T-cell (primary cell): ENCODE measurements at regions of chr19 and their contacts with region 1.

Region 1: DNA sequence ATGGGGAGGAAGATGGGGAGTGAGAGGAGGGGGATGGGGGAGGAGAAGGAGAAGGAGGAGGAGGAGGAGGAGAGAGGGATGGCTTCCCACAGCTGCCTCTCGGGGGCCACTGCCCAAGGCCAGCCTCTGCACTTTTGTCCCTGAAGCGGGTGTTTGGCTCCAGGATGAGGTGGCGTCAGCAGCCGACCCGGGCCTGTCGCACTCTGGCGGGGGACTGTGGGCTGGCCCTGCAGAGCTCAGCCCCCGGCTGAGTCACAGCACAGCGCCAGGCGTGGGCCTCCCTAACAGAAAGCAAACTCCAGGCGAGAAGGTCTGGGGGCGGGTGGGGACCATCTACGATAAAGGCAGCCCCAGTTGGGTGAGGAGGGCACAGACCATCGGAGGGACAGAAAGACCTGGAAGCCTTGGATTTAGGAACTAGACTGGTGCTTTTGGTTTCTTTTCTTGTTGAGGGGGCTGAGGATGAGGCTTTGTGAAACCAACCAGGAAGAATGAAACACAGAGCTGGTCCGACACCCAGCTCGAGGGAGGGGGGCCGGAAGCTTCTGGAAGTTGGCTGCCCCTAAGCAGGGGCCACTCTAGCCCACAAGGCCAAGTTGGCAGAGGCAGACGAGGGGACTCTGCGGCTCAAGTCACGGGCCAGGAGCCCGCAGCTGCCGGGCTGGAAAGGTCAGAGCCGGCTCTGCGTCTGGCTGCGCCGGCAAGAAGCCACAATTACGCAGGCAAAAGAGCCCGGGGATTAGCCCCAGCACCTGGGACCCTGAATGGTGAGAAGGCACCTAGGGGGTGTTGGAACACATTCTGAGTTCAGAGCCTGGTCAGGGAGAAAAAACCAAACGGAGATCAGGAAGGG is 18.2 kb downstream of the LSM4 start:
- DNase-seq: peak in 34 of 35 experiments; percentile 55 to 87 (median 71)
- ATAC-seq: peak; percentile 73 to 85 (median 81)
- H3K4me3 ChIP-seq: peak overlapping the region; percentile 66 to 92
- H3K4me3 Mint-ChIP-seq: peak overlapping the region; percentile 88 to 90 (median 89)
- H3K27ac ChIP-seq: peak overlapping the region; percentile 96
- H3K27ac Mint-ChIP-seq: peak overlapping the region; percentile 99 to 100
- H3K4me1 ChIP-seq: peaks cover 22 to 75% of the 10 kb centered on the region in 2 experiments
- H3K4me1 Mint-ChIP-seq: peaks cover 43 to 53% (median 49%) of the 10 kb centered on the region in 3 donors
- H3K27me3 ChIP-seq: no peaks in the 10 kb centered on the region
- H3K27me3 Mint-ChIP-seq: no peaks in the 10 kb centered on the region

Region 2: DNA sequence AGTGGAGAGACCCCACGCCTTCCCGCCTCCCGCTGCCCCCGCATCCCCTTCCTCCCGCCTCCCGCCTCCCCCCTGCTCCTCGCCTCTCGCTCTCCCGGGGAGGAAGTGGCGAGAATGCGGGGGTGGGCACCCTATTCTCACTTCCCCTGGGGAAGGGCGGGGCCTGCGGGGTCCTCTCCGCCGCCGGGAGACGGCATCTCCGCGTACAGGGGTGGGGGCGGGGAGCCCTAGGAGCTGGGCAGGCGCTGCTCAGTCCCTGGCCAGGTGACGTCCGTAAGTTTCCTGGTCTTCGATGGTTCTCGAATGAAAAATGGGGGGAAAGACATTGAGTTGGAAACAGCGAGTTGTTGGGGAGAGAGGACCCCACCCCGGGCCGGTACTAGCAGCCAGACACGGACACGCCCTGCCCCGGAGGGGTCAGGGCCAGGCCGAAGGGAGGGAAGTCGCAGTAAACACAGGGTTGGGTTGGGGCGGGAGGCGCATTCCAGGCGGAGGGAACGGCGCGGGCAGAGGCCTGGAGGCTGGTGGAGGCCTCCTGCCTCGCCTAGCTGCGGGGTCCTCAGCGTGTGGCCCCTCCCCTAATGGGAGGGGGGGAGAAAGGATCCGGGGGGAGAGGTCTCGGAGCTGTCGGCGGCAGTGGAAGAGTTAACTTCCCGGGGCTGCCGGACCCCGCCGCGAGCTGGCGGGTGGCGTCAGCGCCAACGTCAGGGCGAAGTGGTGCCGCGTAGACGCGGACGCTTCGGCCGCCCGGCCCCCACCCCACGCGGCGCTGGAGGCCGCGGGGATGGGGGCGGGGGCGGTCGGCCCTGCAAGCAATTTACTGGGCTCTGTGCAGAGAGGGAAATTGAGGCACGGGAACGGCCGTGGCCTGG is 12.9 kb before region 1 on chr19:
- CTCF ChIA-PET with region 1: interaction called in 1 of 2 experiments, 6 read pairs
- POLR2A ChIA-PET with region 1: interaction called in 1 of 2 experiments, 13 read pairs
- DNase-seq: peak in 34 of 35 experiments; percentile 56 to 86 (median 72)
- ATAC-seq: peak; percentile 42 to 56 (median 52)
- H3K4me3 ChIP-seq: peak overlapping the region; percentile 79 to 94
- H3K4me3 Mint-ChIP-seq: peak overlapping the region; percentile 86 to 89 (median 89)
- H3K27ac ChIP-seq: peak overlapping the region; percentile 100
- H3K27ac Mint-ChIP-seq: peak overlapping the region; percentile 93 to 96
- H3K4me1 ChIP-seq: peaks cover 14 to 79% of the 10 kb centered on the region in 2 experiments
- H3K4me1 Mint-ChIP-seq: peaks cover 46 to 69% (median 58%) of the 10 kb centered on the region in 3 donors
- H3K27me3 ChIP-seq: no peaks in the 10 kb centered on the region
- H3K27me3 Mint-ChIP-seq: no peaks in the 10 kb centered on the region

Region 3: GRCh38 chr19:18322759-18323460 is 18.2 kb after region 1 on chr19 and contains the start of gene LSM4:
- CTCF ChIA-PET with region 1: interaction called, 6 to 11 read pairs
- POLR2A ChIA-PET with region 1: interaction called, 3 read pairs
- DNase-seq: peak; percentile 99 to 100 (median 99)
- ATAC-seq: peak; percentile 92 to 95 (median 94)
- H3K4me3 ChIP-seq: peak within 1 kb of the TSS; percentile 84 to 93
- H3K4me3 Mint-ChIP-seq: peak within 1 kb of the TSS; percentile 80 to 86 (median 82)
- H3K27ac ChIP-seq: peak within 1 kb of the TSS; percentile 94
- H3K27ac Mint-ChIP-seq: peak within 1 kb of the TSS; percentile 96 to 98
- H3K4me1 ChIP-seq: peaks cover 36 to 62% of the 10 kb centered on the region in 2 experiments
- H3K4me1 Mint-ChIP-seq: peaks cover 52 to 55% (median 54%) of the 10 kb centered on the region in 3 donors
- H3K27me3 ChIP-seq: no peaks in the 10 kb centered on the region
- H3K27me3 Mint-ChIP-seq: no peaks in the 10 kb centered on the region
- total RNA-seq, gene LSM4: 58.5 to 82.7 (median 69.1) TPM

Region 4: GRCh38 chr19:18373892-18374629 is 69.4 kb after region 1 on chr19:
- CTCF ChIA-PET with region 1: no interaction called
- POLR2A ChIA-PET with region 1: no interaction called
- DNase-seq: peak in 31 of 35 experiments; percentile 7 to 73 (median 40)
- ATAC-seq: peak; percentile 29 to 80 (median 66)
- H3K4me3 ChIP-seq: no peak overlapping the region
- H3K4me3 Mint-ChIP-seq: no peak overlapping the region
- H3K27ac ChIP-seq: no peak overlapping the region
- H3K27ac Mint-ChIP-seq: peak overlapping the region in 1 of 2 donors; percentile 44
- H3K4me1 ChIP-seq: peaks cover 0 to 20% of the 10 kb centered on the region in 2 experiments
- H3K4me1 Mint-ChIP-seq: peaks cover 8 to 11% (median 10%) of the 10 kb centered on the region in 3 donors
- H3K27me3 ChIP-seq: peaks cover 0 to 14% of the 10 kb centered on the region in 2 experiments
- H3K27me3 Mint-ChIP-seq: peaks cover 4 to 5% of the 10 kb centered on the region in 2 donors

Region 5: GRCh38 chr19:18388100-18388959 is 83.6 kb after region 1 on chr19:
- CTCF ChIA-PET with region 1: no interaction called
- POLR2A ChIA-PET with region 1: no interaction called
- DNase-seq: peak; percentile 31 to 86 (median 66)
- ATAC-seq: peak; percentile 84 to 92 (median 88)
- H3K4me3 ChIP-seq: peak overlapping the region; percentile 41 to 58
- H3K4me3 Mint-ChIP-seq: peak overlapping the region; percentile 75 to 79 (median 76)
- H3K27ac ChIP-seq: no peak overlapping the region
- H3K27ac Mint-ChIP-seq: no peak overlapping the region
- H3K4me1 ChIP-seq: peaks cover 4 to 20% of the 10 kb centered on the region in 2 experiments
- H3K4me1 Mint-ChIP-seq: peaks cover 10 to 19% (median 12%) of the 10 kb centered on the region in 3 donors
- H3K27me3 ChIP-seq: peaks cover 0 to 85% of the 10 kb centered on the region in 2 experiments
- H3K27me3 Mint-ChIP-seq: peaks cover 14 to 52% of the 10 kb centered on the region in 2 donors

Region 6: GRCh38 chr19:18990128-18990708 is 685.5 kb after region 1 on chr19:
- CTCF ChIA-PET with region 1: no interaction called
- POLR2A ChIA-PET with region 1: no interaction called
- DNase-seq: no peak
- ATAC-seq: no peak
- H3K4me3 ChIP-seq: no peak overlapping the region
- H3K4me3 Mint-ChIP-seq: no peak overlapping the region
- H3K27ac ChIP-seq: no peak overlapping the region
- H3K27ac Mint-ChIP-seq: no peak overlapping the region
- H3K4me1 ChIP-seq: peaks cover 0 to 2% of the 10 kb centered on the region in 2 experiments
- H3K4me1 Mint-ChIP-seq: no peaks in the 10 kb centered on the region
- H3K27me3 ChIP-seq: peaks cover 0 to 17% of the 10 kb centered on the region in 2 experiments
- H3K27me3 Mint-ChIP-seq: peaks cover 0 to 4% of the 10 kb centered on the region in 2 donors